ENCODE measurements at regions of chr20 and their contacts with region 1.

Region 1: GRCh38 chr20:31560094-31560899 is 44.8 kb upstream of the ID1 start:
- DNase-seq: peak; percentile 82
- ATAC-seq: peak; percentile 69
- H3K4me3 Mint-ChIP-seq: no peak overlapping the region
- H3K27ac Mint-ChIP-seq: peak overlapping the region; percentile 87
- H3K4me1 Mint-ChIP-seq: peaks cover 16% of the 10 kb centered on the region
- H3K27me3 Mint-ChIP-seq: no peaks in the 10 kb centered on the region

Region 2: GRCh38 chr20:31473331-31474096 is 86.8 kb before region 1 on chr20:
- POLR2A ChIA-PET with region 1: interaction called, 11 read pairs
- DNase-seq: no peak
- ATAC-seq: no peak
- H3K4me3 Mint-ChIP-seq: no peak overlapping the region
- H3K27ac Mint-ChIP-seq: no peak overlapping the region
- H3K4me1 Mint-ChIP-seq: peaks cover 3% of the 10 kb centered on the region
- H3K27me3 Mint-ChIP-seq: peaks cover 38% of the 10 kb centered on the region